PC-9 (cell line): ENCODE measurements at regions of chr11 and their contacts with region 1.

Region 1: DNA sequence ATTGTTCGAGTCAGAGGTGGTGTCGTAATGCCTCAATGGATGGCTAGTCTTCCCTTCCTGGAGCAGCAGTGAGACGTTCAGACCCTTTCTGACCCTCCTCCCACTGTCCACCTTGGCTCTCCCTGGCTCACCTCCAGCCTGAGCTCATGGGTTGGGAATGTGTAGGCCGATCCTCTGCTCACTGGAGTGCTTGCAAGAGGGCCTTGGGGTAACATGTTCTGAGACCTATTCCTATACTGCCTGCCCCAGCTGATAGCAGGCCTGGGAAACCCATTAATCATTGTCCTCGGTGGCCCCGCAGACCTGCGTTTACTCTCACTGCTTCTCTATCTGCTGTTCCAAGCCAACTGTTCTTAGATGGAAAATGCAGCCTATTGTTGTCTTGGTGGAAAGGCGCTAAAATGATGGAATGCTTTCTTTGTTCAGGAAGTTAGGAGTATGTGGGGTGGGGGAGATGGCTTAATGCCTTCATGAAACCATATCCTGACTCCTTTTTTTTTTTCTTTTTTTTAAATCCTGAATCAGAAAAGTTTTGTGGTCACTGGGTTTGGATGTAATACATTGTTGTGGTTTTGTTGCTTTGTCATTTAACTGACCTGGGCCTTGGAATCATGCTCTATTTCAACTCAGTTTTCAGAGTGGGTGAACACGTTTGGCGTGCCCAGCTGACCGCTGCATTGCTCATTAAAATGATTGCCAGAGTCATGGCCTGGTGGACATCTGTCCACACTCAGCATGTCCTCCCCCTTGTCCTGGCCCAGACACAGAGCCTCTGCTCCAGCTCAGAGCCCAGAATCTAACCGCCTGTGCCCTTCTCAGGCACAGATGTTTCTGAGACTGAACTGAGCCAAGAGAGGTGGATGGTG is 72.5 kb downstream of the MICAL2 start:
- DNase-seq: peak; percentile 89 to 95
- H3K4me3 ChIP-seq: 0 out of 2 replicates have a peak overlapping the region, but pooled peaks have one; percentile 24
- H3K27ac ChIP-seq: peak overlapping the region; percentile 98
- H3K4me1 ChIP-seq: peaks cover 68% of the 10 kb centered on the region
- H3K27me3 ChIP-seq: no peaks in the 10 kb centered on the region
- CTCF ChIP-seq: no peak

Region 2: GRCh38 chr11:12066799-12067508 is 116.0 kb before region 1 on chr11:
- CTCF ChIA-PET with region 1: no interaction called
- POLR2A ChIA-PET with region 1: interaction called, 4 read pairs
- intact Hi-C with region 1: loop called (anchors 5 kb)
- DNase-seq: peak; percentile 41 to 85
- H3K4me3 ChIP-seq: peak overlapping the region; percentile 26; the same call in 1 of the 2 replicates
- H3K27ac ChIP-seq: peak overlapping the region; percentile 94
- H3K4me1 ChIP-seq: peaks cover 39% of the 10 kb centered on the region
- H3K27me3 ChIP-seq: no peaks in the 10 kb centered on the region
- CTCF ChIP-seq: no peak

Region 3: DNA sequence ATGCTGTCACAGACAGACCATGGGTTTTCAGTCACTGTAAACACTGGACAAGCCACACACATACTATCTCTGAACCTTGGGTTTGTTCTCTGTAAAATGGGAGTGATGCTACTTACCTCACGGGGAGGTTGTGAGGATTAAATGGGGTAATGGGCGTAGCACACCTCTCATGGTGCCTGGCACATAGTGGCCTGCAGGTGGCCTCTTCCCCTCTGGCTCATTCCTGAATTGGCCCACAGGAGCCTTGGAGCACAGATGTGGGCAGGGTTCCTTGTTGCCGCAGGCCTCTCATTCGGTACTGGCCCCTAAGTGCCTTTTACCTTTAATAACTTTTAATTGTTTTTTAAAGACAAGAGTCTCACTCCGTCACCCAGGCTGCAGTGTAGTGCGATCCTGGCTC is 60.8 kb before region 1 on chr11:
- CTCF ChIA-PET with region 1: no interaction called
- POLR2A ChIA-PET with region 1: interaction called, 5 read pairs
- intact Hi-C with region 1: loop called (anchors 2 kb)
- DNase-seq: no peak
- H3K4me3 ChIP-seq: no peak overlapping the region
- H3K27ac ChIP-seq: no peak overlapping the region
- H3K4me1 ChIP-seq: peaks cover 87% of the 10 kb centered on the region
- H3K27me3 ChIP-seq: no peaks in the 10 kb centered on the region
- CTCF ChIP-seq: peak; percentile 40; the same call in 1 of the 2 replicates

Region 4: DNA sequence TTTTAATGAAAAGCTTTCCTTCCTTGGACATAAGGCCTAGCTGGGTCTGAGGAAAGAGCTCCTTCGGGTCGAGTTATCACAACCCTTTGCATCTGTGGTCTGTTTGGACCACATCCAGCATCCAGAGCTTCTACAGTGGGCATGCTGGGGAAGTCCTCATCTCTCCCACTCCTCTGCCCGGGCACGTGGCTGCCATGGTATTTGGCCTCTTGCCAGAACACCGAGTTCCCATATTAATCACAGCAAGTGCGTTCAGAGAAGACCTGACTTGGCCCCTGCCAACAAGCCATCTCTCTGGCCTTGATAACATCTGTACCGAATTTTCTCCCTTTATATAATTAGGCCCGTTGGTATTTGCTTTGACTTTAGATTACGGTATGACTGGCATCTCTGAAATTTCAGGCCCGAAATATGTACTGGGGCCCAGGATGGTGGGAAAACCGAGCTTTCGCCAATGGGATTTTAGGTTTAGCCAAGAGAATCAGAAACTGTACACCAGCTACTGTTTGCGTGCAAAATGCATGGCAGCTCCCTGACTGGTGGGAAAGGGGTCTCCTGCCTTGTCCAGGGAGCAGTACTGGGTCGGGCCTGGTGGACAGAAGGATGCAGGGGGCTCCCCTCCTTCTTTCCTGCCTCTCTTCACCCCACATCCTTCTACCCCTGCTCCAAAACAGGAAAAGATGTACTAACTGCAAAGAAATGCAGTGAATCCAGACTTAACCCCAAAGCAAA is 17.5 kb after region 1 on chr11:
- CTCF ChIA-PET with region 1: no interaction called
- POLR2A ChIA-PET with region 1: no interaction called
- intact Hi-C with region 1: no loop called
- DNase-seq: peak in 1 of 2 experiments; percentile 43
- H3K4me3 ChIP-seq: no peak overlapping the region
- H3K27ac ChIP-seq: no peak overlapping the region
- H3K4me1 ChIP-seq: no peaks in the 10 kb centered on the region
- H3K27me3 ChIP-seq: no peaks in the 10 kb centered on the region
- CTCF ChIP-seq: no peak

Region 5: DNA sequence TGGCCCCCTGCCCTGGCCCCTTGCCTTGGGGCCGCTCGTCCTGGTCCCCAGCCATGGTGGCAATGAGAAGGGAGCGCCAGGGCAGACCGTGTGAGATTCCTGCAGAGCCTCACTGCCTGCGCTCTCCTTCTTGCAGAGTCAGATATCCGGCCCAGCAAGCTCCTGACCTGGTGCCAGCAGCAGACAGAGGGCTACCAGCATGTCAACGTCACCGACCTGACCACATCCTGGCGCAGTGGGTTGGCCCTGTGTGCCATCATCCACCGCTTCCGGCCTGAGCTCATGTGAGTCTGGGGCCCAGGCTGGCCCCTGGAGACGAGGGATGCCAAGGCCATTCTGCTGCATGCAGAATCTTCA is 41.6 kb after region 1 on chr11:
- CTCF ChIA-PET with region 1: interaction called, 3 read pairs
- POLR2A ChIA-PET with region 1: no interaction called
- intact Hi-C with region 1: loop called (anchors 1 kb)
- DNase-seq: peak; percentile 78 to 79
- H3K4me3 ChIP-seq: peak overlapping the region; percentile 41; the same call in 1 of the 2 replicates
- H3K27ac ChIP-seq: peak overlapping the region; percentile 94
- H3K4me1 ChIP-seq: peaks cover 70% of the 10 kb centered on the region
- H3K27me3 ChIP-seq: no peaks in the 10 kb centered on the region
- CTCF ChIP-seq: no peak

Region 6: GRCh38 chr11:12281571-12282478 is 98.9 kb after region 1 on chr11:
- CTCF ChIA-PET with region 1: no interaction called
- POLR2A ChIA-PET with region 1: no interaction called
- intact Hi-C with region 1: loop called (anchors 5 kb)
- DNase-seq: peak in 1 of 2 experiments; percentile 68
- H3K4me3 ChIP-seq: no peak overlapping the region
- H3K27ac ChIP-seq: no peak overlapping the region
- H3K4me1 ChIP-seq: peaks cover 34% of the 10 kb centered on the region
- H3K27me3 ChIP-seq: no peaks in the 10 kb centered on the region
- CTCF ChIP-seq: peak; percentile 94

Region 7: GRCh38 chr11:12329797-12330196 is 146.9 kb after region 1 on chr11:
- CTCF ChIA-PET with region 1: no interaction called
- POLR2A ChIA-PET with region 1: no interaction called
- intact Hi-C with region 1: no loop called
- DNase-seq: no peak
- H3K4me3 ChIP-seq: no peak overlapping the region
- H3K27ac ChIP-seq: no peak overlapping the region
- H3K4me1 ChIP-seq: no peaks in the 10 kb centered on the region
- H3K27me3 ChIP-seq: no peaks in the 10 kb centered on the region
- CTCF ChIP-seq: no peak